ENCODE measurements at regions of chr1 and their contacts with region 1.

Region 1: GRCh38 chr1:150561974-150562445 is 12.8 kb downstream of the ADAMTSL4 start:
- DNase-seq: peak; percentile 85 to 92
- H3K4me3 ChIP-seq: peak overlapping the region; percentile 76
- H3K27ac ChIP-seq: peak overlapping the region; percentile 98
- H3K4me1 ChIP-seq: peaks cover 50% of the 10 kb centered on the region
- H3K27me3 ChIP-seq: no peaks in the 10 kb centered on the region
- CTCF ChIP-seq: no peak

Region 2: GRCh38 chr1:150464422-150464826 is 97.6 kb before region 1 on chr1:
- CTCF ChIA-PET with region 1: no interaction called
- POLR2A ChIA-PET with region 1: no interaction called
- intact Hi-C with region 1: loop called (anchors 1 kb)
- DNase-seq: peak; percentile 35 to 49
- H3K4me3 ChIP-seq: no peak overlapping the region
- H3K27ac ChIP-seq: no peak overlapping the region
- H3K4me1 ChIP-seq: no peaks in the 10 kb centered on the region
- H3K27me3 ChIP-seq: no peaks in the 10 kb centered on the region
- CTCF ChIP-seq: peak; percentile 83

Region 3: DNA sequence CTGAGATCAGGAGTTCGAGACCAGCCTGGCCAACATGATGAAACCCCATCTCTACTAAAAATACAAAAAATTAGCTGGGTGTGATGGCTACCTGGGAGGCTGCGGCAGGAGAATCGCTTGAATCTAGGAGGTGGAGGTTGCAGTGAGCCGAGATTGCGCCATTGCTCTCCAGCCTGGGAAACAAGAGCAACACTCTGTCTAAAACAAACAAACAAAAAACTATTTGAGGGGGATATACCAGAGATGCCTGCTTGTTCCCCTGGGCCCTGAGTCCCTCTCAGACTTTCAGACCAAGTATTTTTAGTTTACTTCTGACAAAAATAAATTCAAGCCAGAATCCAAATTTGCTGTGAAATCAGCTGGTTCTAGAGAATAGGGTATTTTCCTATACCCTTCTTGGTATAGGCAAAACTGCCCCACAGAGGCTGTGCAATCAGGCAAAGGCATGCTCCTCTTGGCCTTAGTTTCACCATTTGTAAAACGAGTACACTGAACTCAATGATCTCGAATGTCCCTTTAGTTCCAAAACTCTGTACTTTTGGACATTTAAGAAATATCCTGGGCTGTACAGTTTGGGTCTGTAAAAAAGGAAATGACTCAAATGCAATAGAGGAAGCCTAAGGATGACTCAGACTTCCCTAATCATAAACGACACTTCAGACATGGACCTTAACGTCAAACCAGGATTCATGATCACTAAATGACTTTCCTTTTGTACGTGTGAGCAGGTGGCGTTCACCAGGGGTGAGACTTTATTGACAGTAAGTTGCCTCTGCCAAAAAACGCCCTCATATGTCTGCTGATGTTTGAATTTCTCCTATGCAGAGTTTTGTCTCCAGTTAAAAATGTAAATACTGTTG is 51.3 kb after region 1 on chr1:
- CTCF ChIA-PET with region 1: interaction called, 5 read pairs
- POLR2A ChIA-PET with region 1: interaction called, 5 read pairs
- intact Hi-C with region 1: loop called (anchors 5 kb)
- DNase-seq: peak in 1 of 2 experiments; percentile 86
- H3K4me3 ChIP-seq: no peak overlapping the region
- H3K27ac ChIP-seq: peak overlapping the region; percentile 97
- H3K4me1 ChIP-seq: peaks cover 52% of the 10 kb centered on the region
- H3K27me3 ChIP-seq: no peaks in the 10 kb centered on the region
- CTCF ChIP-seq: no peak

Region 4: DNA sequence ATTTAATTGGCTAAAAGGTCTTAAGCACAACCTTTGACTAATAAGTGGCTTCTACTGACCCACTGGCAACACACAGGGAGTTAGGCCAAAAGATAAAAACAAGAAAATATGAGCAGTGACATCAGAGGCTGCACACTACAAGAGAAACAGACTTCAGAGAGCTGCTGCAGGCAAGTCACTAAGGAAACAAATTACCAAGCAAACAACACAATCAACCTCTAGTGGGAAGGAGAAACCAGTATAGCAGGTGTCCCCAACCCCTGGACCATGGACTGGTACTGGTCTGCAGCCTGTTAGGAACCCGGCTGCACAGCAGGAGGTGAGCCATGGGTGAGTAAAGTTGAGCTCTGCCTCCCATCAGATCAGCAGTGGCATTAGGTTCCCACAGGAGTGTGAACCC is 88.2 kb after region 1 on chr1:
- CTCF ChIA-PET with region 1: no interaction called
- POLR2A ChIA-PET with region 1: no interaction called
- intact Hi-C with region 1: loop called (anchors 1 kb)
- DNase-seq: peak; percentile 67 to 94
- H3K4me3 ChIP-seq: no peak overlapping the region
- H3K27ac ChIP-seq: peak overlapping the region; percentile 65; the same call in 1 of the 2 replicates
- H3K4me1 ChIP-seq: peaks cover 20% of the 10 kb centered on the region
- H3K27me3 ChIP-seq: no peaks in the 10 kb centered on the region
- CTCF ChIP-seq: no peak

Region 5: DNA sequence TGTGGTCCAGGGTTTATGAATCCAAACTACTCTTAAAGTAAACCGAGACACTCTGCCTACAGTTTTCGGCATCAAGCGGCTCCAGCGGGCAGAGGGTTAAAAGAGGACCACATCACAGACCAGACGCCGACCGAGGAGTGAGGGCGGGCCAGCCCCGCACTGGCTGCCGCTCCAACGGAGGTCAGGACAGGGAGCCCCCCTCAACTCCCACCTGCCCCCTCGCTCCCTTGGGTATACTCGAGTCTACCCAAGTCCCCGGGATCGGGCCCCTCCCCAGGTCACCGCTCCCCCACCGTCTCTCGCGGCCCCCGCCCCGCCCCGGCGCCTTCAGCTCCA is 314.1 kb after region 1 on chr1:
- CTCF ChIA-PET with region 1: no interaction called
- POLR2A ChIA-PET with region 1: interaction called, 3 read pairs
- intact Hi-C with region 1: loop called (anchors 1 kb)
- DNase-seq: peak; percentile 37 to 54
- H3K4me3 ChIP-seq: peak overlapping the region; percentile 97
- H3K27ac ChIP-seq: peak overlapping the region; percentile 35; the same call in 1 of the 2 replicates
- H3K4me1 ChIP-seq: peaks cover 24% of the 10 kb centered on the region
- H3K27me3 ChIP-seq: no peaks in the 10 kb centered on the region
- CTCF ChIP-seq: no peak

Region 6: GRCh38 chr1:150895601-150896000 is 333.6 kb after region 1 on chr1:
- CTCF ChIA-PET with region 1: no interaction called
- POLR2A ChIA-PET with region 1: no interaction called
- intact Hi-C with region 1: no loop called
- DNase-seq: peak; percentile 48 to 78
- H3K4me3 ChIP-seq: no peak overlapping the region
- H3K27ac ChIP-seq: no peak overlapping the region
- H3K4me1 ChIP-seq: peaks cover 5% of the 10 kb centered on the region; the same call in 1 of the 2 replicates
- H3K27me3 ChIP-seq: no peaks in the 10 kb centered on the region
- CTCF ChIP-seq: no peak

Region 7: DNA sequence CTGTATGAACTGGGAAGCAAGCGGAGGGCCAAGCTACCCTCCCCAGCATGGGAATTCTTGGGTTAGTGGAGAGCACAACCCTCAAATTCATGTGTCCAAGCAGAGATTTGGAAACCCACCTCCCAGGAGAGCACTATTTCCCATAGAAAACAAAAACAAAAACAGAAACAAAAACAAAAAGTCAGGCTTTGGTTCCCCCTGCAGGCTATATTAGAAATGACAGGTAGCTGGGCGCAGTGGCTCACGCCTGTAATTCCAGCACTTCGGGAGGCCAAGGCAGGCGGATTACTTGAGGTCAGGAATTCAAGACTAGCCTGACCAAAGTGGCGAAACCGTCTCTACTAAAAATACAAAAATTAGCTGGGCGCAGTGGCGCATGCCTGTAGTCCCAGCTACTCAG is 433.9 kb after region 1 on chr1:
- CTCF ChIA-PET with region 1: no interaction called
- POLR2A ChIA-PET with region 1: no interaction called
- intact Hi-C with region 1: loop called (anchors 5 kb)
- DNase-seq: peak in 1 of 2 experiments; percentile 43
- H3K4me3 ChIP-seq: no peak overlapping the region
- H3K27ac ChIP-seq: no peak overlapping the region
- H3K4me1 ChIP-seq: 0 out of 2 replicates have a peak, but pooled peaks cover 5% of the 10 kb centered on the region
- H3K27me3 ChIP-seq: no peaks in the 10 kb centered on the region
- CTCF ChIP-seq: peak; percentile 97